Caco-2 (cell line): ENCODE measurements at regions of chr5 and their contacts with region 1.

Region 1: DNA sequence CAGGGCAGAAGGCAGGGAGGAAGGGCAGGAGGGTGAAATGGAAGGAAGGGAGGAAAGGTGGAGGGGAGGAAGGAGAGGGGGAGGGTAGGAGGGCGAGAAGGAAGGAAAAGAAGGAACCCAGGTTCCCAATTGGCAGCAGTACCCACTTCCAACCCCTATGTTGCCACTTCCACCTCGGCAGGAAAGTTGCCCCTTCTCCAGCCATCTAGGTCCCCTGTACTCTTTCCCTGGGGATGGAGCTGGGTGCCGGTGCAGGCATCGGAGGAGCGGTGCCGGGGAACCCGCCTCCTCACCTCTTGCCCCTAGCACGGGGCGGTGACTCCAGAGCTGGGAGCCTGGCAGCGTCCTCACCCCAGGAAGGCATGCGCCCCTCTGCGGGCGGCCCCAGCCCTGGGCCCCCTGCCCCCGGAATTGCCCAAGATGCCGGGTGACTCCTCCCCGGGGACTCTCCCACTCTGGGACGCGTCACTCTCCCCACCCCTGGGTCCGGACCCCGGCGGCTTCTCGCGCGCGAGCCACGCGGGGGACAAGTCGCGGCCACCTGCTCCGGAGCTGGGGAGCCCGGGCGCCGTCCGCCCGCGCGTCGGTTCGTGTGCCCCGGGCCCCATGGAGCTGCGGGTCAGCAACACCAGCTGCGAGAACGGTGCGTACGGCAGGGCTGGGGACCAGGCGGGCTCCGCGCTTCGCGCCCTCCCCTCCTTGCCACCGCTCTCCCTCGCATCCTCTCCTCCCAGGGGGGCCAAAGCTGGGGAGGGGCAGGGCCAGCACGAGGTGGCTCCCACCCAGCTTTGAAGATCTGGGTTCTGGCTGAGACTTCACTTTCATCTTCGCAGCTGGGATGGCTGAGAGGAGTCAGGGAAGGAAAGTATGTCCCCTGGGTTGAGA is at the start of gene NIPAL4:
- DNase-seq: peak in 1 of 2 experiments; percentile 34
- H3K4me3 ChIP-seq: peak within 1 kb of the TSS; percentile 38
- H3K4me3 Mint-ChIP-seq: peak within 1 kb of the TSS; percentile 67
- H3K27ac Mint-ChIP-seq: no peak within 1 kb of the TSS
- H3K4me1 ChIP-seq: no peaks in the 10 kb centered on the region; the same call in 1 of the 2 replicates
- H3K4me1 Mint-ChIP-seq: peaks cover 13% of the 10 kb centered on the region
- H3K27me3 ChIP-seq: no peaks in the 10 kb centered on the region
- H3K27me3 Mint-ChIP-seq: peaks cover 3% of the 10 kb centered on the region
- CTCF ChIP-seq: no peak
- total RNA-seq, gene NIPAL4: 0.81 and 0.86 TPM in 2 replicates

Region 2: DNA sequence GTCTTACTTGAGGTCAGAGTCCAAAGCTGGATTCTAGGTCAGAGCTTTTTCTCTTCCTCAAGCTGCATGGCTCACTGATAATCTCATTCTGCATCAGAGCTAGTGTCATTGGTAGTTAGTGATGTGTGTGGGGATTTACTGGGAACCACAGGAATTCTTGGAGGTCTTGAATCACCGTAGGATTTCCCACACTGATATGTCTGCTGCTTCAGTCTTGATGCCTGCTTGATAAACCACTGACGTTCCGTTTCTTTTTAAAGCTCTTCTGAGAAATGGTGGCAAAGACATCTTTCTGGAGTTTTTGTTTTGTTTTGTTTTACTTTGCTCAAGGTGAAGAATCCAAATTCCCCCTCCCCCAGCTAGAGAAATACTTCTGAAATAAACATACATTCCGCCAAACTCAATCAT is 292.7 kb before region 1 on chr5:
- CTCF ChIA-PET with region 1: no interaction called
- POLR2A ChIA-PET with region 1: no interaction called
- intact Hi-C with region 1: no loop called
- DNase-seq: no peak
- H3K4me3 ChIP-seq: no peak overlapping the region
- H3K4me3 Mint-ChIP-seq: no peak overlapping the region
- H3K27ac Mint-ChIP-seq: no peak overlapping the region
- H3K4me1 ChIP-seq: no peaks in the 10 kb centered on the region
- H3K4me1 Mint-ChIP-seq: no peaks in the 10 kb centered on the region
- H3K27me3 ChIP-seq: no peaks in the 10 kb centered on the region; the same call in 1 of the 2 replicates
- H3K27me3 Mint-ChIP-seq: peaks cover 16% of the 10 kb centered on the region
- CTCF ChIP-seq: no peak

Region 3: GRCh38 chr5:157447201-157447637 is 12.7 kb before region 1 on chr5:
- CTCF ChIA-PET with region 1: interaction called, 7 read pairs
- POLR2A ChIA-PET with region 1: no interaction called
- intact Hi-C with region 1: loop called (anchors 1 kb)
- DNase-seq: peak; percentile 77 to 83
- H3K4me3 ChIP-seq: no peak overlapping the region
- H3K4me3 Mint-ChIP-seq: peak overlapping the region; percentile 60
- H3K27ac Mint-ChIP-seq: peak overlapping the region; percentile 14
- H3K4me1 ChIP-seq: peaks cover 24% of the 10 kb centered on the region
- H3K4me1 Mint-ChIP-seq: peaks cover 21% of the 10 kb centered on the region
- H3K27me3 ChIP-seq: no peaks in the 10 kb centered on the region
- H3K27me3 Mint-ChIP-seq: no peaks in the 10 kb centered on the region
- CTCF ChIP-seq: no peak

Region 4: GRCh38 chr5:157471709-157472108 is 11.8 kb after region 1 on chr5:
- CTCF ChIA-PET with region 1: interaction called, 10 read pairs
- POLR2A ChIA-PET with region 1: no interaction called
- intact Hi-C with region 1: no loop called
- DNase-seq: peak; percentile 48 to 58
- H3K4me3 ChIP-seq: no peak overlapping the region
- H3K4me3 Mint-ChIP-seq: no peak overlapping the region
- H3K27ac Mint-ChIP-seq: no peak overlapping the region
- H3K4me1 ChIP-seq: no peaks in the 10 kb centered on the region
- H3K4me1 Mint-ChIP-seq: no peaks in the 10 kb centered on the region
- H3K27me3 ChIP-seq: no peaks in the 10 kb centered on the region
- H3K27me3 Mint-ChIP-seq: no peaks in the 10 kb centered on the region
- CTCF ChIP-seq: peak; percentile 50 to 62